Calu3 (cell line): ENCODE measurements at regions of chr1 and their contacts with region 1.

Region 1: GRCh38 chr1:222171005-222171404 is 376.9 kb downstream of the HHIPL2 start:
- DNase-seq: peak; percentile 16
- H3K4me3 Mint-ChIP-seq: no peak overlapping the region
- H3K27ac Mint-ChIP-seq: no peak overlapping the region
- H3K4me1 Mint-ChIP-seq: no peaks in the 10 kb centered on the region
- H3K27me3 Mint-ChIP-seq: no peaks in the 10 kb centered on the region
- CTCF ChIP-seq: peak; percentile 73

Region 2: DNA sequence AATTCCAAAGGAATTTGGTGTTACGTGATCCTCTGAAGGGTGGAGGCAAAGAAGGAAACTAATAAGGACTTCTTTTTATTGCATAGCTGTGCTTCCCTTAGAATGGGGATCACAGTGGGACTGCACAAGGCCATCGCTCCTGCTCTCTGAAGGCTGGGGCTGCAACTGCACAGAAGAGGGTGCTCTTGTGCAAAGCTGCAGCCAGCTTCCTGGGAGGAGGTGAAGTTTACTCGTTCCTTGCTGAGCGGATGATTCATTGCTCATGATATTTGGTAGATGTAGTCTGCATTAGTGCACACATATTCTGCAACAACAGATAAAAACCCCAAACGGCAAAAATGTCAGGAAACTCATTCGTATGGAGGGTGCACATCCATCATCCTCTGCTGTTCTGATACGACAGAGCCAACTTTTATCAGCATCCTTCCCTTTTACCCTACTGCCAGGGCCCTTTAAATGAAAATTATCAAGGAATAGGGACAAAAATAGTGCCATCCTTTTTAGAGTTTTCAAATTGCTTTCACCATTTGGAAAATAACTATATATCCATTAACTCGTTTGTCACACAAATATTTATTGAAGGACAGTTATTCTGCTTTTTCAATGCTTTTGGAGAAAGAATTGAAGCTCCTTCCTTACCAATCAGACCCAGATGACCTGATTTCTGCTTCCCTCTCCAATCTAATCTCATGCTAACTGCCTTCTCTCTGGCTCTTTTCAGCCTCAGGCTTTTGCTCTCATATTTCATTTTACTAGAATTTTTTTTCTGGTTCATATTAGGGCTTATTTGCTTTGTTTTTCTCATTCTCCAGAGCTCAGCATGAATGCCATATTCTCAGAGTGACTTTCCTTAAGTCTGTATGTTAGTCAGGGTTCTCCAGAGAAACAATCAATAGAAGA is 692.7 kb before region 1 on chr1:
- CTCF ChIA-PET with region 1: interaction called, 19 read pairs
- intact Hi-C with region 1: loop called (anchors 1 kb)
- DNase-seq: peak; percentile 81
- H3K4me3 Mint-ChIP-seq: no peak overlapping the region
- H3K27ac Mint-ChIP-seq: no peak overlapping the region
- H3K4me1 Mint-ChIP-seq: peaks cover 14% of the 10 kb centered on the region
- H3K27me3 Mint-ChIP-seq: no peaks in the 10 kb centered on the region
- CTCF ChIP-seq: peak; percentile 71

Region 3: GRCh38 chr1:221543529-221544120 is 627.4 kb before region 1 on chr1:
- CTCF ChIA-PET with region 1: interaction called, 7 read pairs
- intact Hi-C with region 1: loop called (anchors 1 kb)
- DNase-seq: no peak
- H3K4me3 Mint-ChIP-seq: no peak overlapping the region
- H3K27ac Mint-ChIP-seq: no peak overlapping the region
- H3K4me1 Mint-ChIP-seq: peaks cover 14% of the 10 kb centered on the region
- H3K27me3 Mint-ChIP-seq: no peaks in the 10 kb centered on the region
- CTCF ChIP-seq: peak; percentile 40

Region 4: DNA sequence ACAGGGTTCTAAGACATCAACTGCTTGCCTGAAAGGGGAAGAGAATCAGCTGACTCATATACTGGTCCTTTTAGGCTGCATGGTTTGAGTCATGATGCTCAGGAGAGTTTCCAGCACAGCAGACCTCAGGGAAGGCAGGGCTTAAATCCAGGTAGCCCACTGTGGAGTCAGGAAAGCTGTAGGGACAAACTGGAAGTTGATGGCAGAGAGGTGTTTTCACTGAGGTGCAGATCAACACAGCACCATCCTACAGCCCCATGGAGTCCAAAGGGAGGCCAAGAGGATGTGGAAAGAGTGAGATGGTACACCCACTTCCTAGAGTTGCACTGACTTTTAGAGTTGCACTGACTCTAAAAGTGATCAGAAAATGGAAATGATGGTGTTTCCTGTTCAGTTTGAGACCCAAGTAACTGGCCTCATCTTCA is 176.7 kb before region 1 on chr1:
- CTCF ChIA-PET with region 1: interaction called, 3 read pairs
- intact Hi-C with region 1: loop called (anchors 5 kb)
- DNase-seq: no peak
- H3K4me3 Mint-ChIP-seq: no peak overlapping the region
- H3K27ac Mint-ChIP-seq: peak overlapping the region; percentile 66
- H3K4me1 Mint-ChIP-seq: peaks cover 53% of the 10 kb centered on the region
- H3K27me3 Mint-ChIP-seq: no peaks in the 10 kb centered on the region
- CTCF ChIP-seq: no peak

Region 5: GRCh38 chr1:222095606-222096475 is 75.2 kb before region 1 on chr1:
- CTCF ChIA-PET with region 1: interaction called, 7 read pairs
- intact Hi-C with region 1: loop called (anchors 2 kb)
- DNase-seq: peak; percentile 58
- H3K4me3 Mint-ChIP-seq: no peak overlapping the region
- H3K27ac Mint-ChIP-seq: no peak overlapping the region
- H3K4me1 Mint-ChIP-seq: no peaks in the 10 kb centered on the region
- H3K27me3 Mint-ChIP-seq: no peaks in the 10 kb centered on the region
- CTCF ChIP-seq: peak; percentile 93